ENCODE measurements at regions of chr10 and their contacts with region 1.

Region 1: DNA sequence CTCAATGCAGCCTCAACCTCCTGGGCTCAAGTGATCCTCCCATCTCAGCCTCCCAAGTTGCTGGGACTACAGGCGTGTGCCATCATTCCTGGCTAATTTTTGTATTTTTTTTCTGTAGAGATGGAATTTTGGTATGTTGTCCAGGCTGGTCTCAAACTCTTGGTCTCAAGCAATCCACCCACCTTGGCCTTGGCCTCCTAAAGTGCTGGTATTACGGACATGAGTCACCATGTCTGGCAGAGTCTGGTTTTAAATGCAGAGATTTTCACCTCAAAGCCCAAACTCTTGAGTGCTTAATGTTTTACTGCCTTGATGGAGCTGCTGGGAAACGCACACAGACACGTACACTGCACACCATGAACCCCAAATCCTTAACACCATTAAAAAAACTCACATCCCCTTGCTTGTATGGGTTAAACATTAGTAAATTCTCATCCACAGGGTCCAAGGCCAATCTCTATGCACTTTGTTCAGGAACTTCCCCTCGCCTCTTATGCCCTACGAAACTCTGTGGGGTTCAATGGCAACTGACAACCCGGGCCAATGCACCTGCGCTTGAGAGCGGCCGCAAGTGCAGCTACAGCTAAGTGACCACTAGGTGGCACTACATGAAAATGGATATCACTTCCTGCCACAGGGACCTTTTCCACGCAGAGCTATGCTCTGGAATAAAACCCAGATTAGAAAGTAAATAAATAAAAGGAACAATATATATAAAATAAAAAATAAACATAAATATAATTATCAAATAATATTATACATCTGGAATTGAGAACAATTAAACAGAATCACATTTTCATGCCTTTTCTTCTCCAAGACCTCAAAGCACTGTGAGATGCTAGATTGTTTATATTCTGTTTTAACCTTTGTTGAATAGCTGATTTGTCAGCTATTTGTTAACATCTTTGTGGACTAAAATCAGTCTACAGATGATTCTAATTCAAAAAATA is 66.9 kb upstream of the AFAP1L2 start:
- DNase-seq: peak in 1 of 2 experiments; percentile 39
- H3K4me3 ChIP-seq: no peak overlapping the region
- H3K27ac ChIP-seq: no peak overlapping the region
- H3K4me1 ChIP-seq: peaks cover 8% of the 10 kb centered on the region; the same call in 1 of the 2 replicates
- H3K27me3 ChIP-seq: no peaks in the 10 kb centered on the region
- CTCF ChIP-seq: peak; percentile 78

Region 2: GRCh38 chr10:113953505-113954272 is 517.5 kb before region 1 on chr10:
- CTCF ChIA-PET with region 1: no interaction called
- POLR2A ChIA-PET with region 1: no interaction called
- intact Hi-C with region 1: no loop called
- DNase-seq: no peak
- H3K4me3 ChIP-seq: no peak overlapping the region
- H3K27ac ChIP-seq: peak overlapping the region; percentile 43; the same call in 1 of the 2 replicates
- H3K4me1 ChIP-seq: peaks cover 24% of the 10 kb centered on the region
- H3K27me3 ChIP-seq: no peaks in the 10 kb centered on the region
- CTCF ChIP-seq: 0 out of 2 replicates have a peak, but pooled peaks have one; percentile 41

Region 3: DNA sequence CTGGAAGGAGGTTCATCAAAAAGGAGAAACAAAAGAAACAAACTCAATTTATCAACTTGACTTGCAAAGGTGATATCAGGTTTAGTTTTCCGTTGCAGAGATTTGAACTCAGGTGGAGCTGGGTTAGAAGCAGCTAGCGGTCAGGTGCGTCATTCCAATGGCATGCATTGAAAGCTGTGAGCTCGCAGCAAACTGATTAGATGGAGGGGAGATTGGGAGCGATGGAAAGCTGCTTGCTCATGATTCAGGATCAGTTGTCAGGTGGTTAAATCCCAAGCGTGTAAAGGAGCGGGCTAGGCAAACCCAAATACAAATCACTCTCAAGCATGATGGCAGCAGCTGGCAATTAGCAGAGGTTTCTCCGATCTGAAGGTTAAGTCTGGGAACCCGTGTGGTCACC is 17.7 kb before region 1 on chr10:
- CTCF ChIA-PET with region 1: no interaction called
- POLR2A ChIA-PET with region 1: no interaction called
- intact Hi-C with region 1: no loop called
- DNase-seq: peak in 1 of 2 experiments; percentile 35
- H3K4me3 ChIP-seq: no peak overlapping the region
- H3K27ac ChIP-seq: no peak overlapping the region
- H3K4me1 ChIP-seq: no peaks in the 10 kb centered on the region
- H3K27me3 ChIP-seq: no peaks in the 10 kb centered on the region
- CTCF ChIP-seq: no peak

Region 4: GRCh38 chr10:114526504-114527238 is 55.4 kb after region 1 on chr10:
- CTCF ChIA-PET with region 1: no interaction called
- POLR2A ChIA-PET with region 1: no interaction called
- intact Hi-C with region 1: loop called (anchors 5 kb)
- DNase-seq: peak; percentile 71 to 83
- H3K4me3 ChIP-seq: peak overlapping the region; percentile 61
- H3K27ac ChIP-seq: peak overlapping the region; percentile 88
- H3K4me1 ChIP-seq: peaks cover 17% of the 10 kb centered on the region
- H3K27me3 ChIP-seq: no peaks in the 10 kb centered on the region
- CTCF ChIP-seq: no peak

Region 5: DNA sequence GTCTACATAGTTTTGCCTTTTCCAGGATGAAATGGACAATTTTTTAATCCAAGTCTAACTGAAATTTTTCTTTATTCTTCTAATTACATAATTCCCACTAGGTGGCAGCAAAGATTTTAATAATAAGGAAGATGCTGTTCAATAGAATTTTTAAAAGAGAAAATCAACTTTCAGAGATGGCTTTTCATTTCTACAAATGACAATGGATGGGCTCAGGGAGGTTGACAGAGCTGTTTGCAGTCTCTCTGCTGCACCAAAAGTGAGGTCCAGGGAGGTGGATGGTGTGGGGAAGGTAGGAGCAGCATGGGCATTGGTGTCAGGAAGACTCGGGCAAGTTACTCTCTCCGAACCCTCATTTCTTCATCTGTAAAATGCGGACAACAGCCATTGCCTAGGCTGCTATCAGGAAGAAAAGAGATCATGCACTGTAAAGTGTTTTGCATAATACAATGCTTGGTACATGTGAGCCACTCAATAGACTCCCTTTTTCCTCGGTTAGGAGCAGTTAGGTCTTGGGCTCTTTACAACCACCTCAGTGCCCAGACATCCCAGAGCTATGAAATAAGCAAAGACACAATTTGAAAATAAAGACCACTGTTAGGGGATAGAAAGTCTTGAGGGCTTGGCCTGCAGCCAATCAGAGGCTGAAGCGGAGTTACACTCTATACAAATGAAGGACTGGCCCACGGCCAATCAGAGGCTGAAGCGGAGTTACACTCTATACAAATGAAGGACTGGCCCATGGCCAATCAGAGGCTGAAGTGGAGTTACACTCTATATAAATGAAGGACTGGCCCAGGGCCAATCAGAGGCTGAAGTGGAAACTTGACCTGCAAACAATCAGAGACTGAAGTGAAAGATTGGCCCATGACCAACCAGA is 79.8 kb after region 1 on chr10:
- CTCF ChIA-PET with region 1: no interaction called
- POLR2A ChIA-PET with region 1: no interaction called
- intact Hi-C with region 1: loop called (anchors 1 kb)
- DNase-seq: peak in 1 of 2 experiments; percentile 40
- H3K4me3 ChIP-seq: no peak overlapping the region
- H3K27ac ChIP-seq: no peak overlapping the region
- H3K4me1 ChIP-seq: no peaks in the 10 kb centered on the region
- H3K27me3 ChIP-seq: no peaks in the 10 kb centered on the region
- CTCF ChIP-seq: peak; percentile 74

Region 6: GRCh38 chr10:114754445-114755320 is 283.5 kb after region 1 on chr10:
- CTCF ChIA-PET with region 1: interaction called, 11 read pairs
- POLR2A ChIA-PET with region 1: no interaction called
- intact Hi-C with region 1: no loop called
- DNase-seq: peak; percentile 44 to 80
- H3K4me3 ChIP-seq: peak overlapping the region; percentile 29; the same call in 1 of the 2 replicates
- H3K27ac ChIP-seq: peak overlapping the region; percentile 92
- H3K4me1 ChIP-seq: peaks cover 28% of the 10 kb centered on the region
- H3K27me3 ChIP-seq: no peaks in the 10 kb centered on the region
- CTCF ChIP-seq: no peak

Region 7: DNA sequence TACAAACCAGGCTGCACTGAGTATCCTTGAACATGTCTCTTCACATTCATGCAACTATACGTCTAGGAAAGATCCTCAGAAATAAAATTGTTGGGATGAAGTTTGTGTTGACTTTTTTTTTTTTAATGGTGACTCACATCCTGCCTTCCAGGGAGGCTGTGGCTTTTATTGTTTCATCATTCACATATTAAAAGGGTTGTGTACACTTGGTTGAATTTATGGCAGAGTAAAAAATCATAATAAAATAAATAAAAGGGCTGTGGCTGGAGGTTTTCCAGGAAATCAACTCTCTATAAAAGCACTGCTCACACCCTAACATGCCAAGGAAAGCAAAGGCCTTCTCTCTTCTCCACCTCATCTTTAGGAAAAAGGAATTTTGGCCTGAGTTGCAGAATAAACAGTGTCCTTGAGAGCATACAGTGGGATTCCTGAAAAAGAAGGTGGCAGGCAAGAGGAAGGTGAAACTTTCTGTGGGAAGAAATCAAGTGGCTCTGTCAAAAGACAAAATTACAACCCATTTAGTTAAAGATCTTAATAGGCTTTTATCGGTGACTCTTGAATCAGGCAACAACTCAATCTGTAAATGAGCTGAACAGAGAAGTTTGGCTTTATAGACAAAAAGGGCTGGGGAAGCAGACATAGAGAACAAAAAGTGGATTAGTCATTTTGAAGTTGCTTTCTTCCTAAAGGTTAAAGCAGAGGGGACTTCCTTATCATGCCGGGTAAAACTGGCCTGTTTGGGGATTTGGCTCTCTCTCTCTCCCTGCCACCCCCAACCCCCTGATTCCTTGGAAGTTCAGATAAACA is 308.8 kb after region 1 on chr10:
- CTCF ChIA-PET with region 1: no interaction called
- POLR2A ChIA-PET with region 1: no interaction called
- intact Hi-C with region 1: loop called (anchors 5 kb)
- DNase-seq: peak in 1 of 2 experiments; percentile 81
- H3K4me3 ChIP-seq: no peak overlapping the region
- H3K27ac ChIP-seq: peak overlapping the region; percentile 74
- H3K4me1 ChIP-seq: peaks cover 22% of the 10 kb centered on the region
- H3K27me3 ChIP-seq: no peaks in the 10 kb centered on the region
- CTCF ChIP-seq: no peak

Region 8: DNA sequence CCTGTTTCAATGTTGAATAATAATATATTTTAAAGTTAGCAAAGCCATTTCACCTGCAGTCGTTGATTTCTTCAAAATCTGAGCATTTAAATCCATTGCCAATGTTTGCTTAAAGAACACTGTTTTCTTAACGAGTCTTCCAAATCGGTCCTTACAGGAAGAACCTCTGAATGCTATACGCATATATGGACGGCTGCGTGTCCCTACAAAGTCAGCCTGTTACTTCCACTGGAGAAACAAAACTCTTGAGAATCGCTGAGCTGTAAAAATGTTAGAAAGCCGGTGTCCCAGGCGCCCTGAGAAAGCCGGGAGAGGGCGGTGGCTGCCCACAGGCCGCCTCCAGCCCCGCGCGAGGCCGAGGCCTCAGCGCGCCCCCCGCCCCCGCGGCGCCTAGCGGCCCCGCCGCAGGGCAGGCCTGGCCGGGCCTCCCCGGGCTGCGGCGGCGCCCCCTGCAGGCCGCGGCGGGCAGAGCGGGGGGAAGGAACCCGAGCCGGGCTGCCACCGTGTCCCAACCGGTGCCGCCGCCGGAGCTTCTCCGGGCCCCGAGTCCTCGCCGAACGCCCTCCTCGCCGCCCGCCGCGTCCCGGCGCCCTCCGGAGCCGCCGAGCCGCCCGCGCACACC is 350.2 kb after region 1 on chr10 and contains the start of gene FHIP2A:
- CTCF ChIA-PET with region 1: interaction called, 16 read pairs
- POLR2A ChIA-PET with region 1: no interaction called
- intact Hi-C with region 1: no loop called
- DNase-seq: peak in 1 of 2 experiments; percentile 75
- H3K4me3 ChIP-seq: peak within 1 kb of the TSS; percentile 82
- H3K27ac ChIP-seq: peak within 1 kb of the TSS; percentile 97
- H3K4me1 ChIP-seq: peaks cover 29% of the 10 kb centered on the region
- H3K27me3 ChIP-seq: no peaks in the 10 kb centered on the region
- CTCF ChIP-seq: 0 out of 2 replicates have a peak, but pooled peaks have one; percentile 24
- total RNA-seq, gene FHIP2A: 16.0 and 18.3 TPM in 2 replicates

Region 9: DNA sequence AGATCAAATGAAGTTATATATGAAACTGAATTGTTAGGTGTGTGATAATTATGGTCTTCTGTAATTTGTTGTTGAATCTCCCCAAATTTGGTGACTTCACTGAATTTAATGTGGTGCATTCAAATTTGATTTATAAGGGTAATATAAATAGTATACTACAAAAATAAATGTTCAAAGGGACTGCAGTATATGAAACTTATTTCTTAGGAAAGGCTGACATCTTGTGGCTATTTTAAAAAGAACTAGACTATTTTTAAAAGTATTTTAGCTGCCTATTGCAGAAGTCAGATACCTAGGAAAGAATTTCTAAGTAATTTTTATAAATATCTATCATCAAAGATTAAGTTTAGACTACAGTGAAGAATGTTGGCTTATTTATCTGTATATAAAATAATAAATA is 658.5 kb after region 1 on chr10:
- CTCF ChIA-PET with region 1: no interaction called
- POLR2A ChIA-PET with region 1: no interaction called
- intact Hi-C with region 1: loop called (anchors 10 kb)
- DNase-seq: no peak
- H3K4me3 ChIP-seq: no peak overlapping the region
- H3K27ac ChIP-seq: no peak overlapping the region
- H3K4me1 ChIP-seq: no peaks in the 10 kb centered on the region
- H3K27me3 ChIP-seq: no peaks in the 10 kb centered on the region
- CTCF ChIP-seq: peak; percentile 50